Gastrocnemius medialis (tissue), 4 donors: ENCODE measurements at regions of chr2 and their contacts with region 1.

Region 1: GRCh38 chr2:3379647-3380534 is at the start of gene TRAPPC12:
- DNase-seq: peak; percentile 81 to 89
- ATAC-seq: peak; percentile 81 to 83
- H3K4me3 ChIP-seq: peak within 1 kb of the TSS; percentile 83 to 99 (median 91)
- H3K27ac ChIP-seq: peak within 1 kb of the TSS; percentile 90 to 93 (median 93)
- H3K4me1 ChIP-seq: peaks cover 29 to 36% of the 10 kb centered on the region in 2 donors
- H3K27me3 ChIP-seq: no peaks in the 10 kb centered on the region
- CTCF ChIP-seq: peak in 3 of 5 experiments; percentile 19 to 57 (median 55)
- POLR2A ChIP-seq: peak; percentile 72 to 79
- total RNA-seq, gene TRAPPC12: 36.6 to 57.4 (median 53.1) TPM

Region 2: DNA sequence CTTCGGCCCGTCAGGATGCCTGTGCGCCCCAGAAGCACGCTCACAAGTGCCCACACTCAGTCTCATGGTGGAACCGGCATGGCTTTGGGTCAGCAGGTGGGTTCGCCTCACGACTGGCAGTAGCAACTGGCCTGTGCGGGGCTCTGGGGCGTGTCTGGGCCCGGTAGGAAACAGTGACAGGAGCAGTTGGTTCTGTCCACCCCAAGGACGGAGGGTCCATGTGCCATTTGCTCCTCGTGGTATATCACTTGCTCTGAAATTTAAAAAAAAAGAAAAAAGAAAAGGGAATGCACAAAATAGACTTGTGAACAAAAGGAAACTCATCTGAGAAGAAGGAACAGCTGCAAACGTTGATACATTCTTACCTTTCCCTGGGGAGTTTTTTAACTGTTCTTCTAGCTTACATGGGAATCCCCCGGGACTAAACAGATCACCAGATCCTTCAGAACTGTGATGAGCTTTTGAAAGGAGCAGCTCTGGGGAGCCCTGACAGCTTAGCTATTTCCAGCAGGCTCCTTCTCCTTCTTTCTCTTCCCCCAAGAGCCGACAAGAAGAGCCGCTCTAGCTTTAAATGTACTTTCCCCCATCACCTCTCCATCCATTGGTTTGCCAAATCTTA is 42.4 kb after region 1 on chr2:
- in situ Hi-C with region 1: no loop called
- intact Hi-C with region 1: no loop called
- DNase-seq: no peak
- ATAC-seq: no peak
- H3K4me3 ChIP-seq: no peak overlapping the region
- H3K27ac ChIP-seq: no peak overlapping the region
- H3K4me1 ChIP-seq: no peaks in the 10 kb centered on the region
- H3K27me3 ChIP-seq: no peaks in the 10 kb centered on the region
- CTCF ChIP-seq: no peak
- POLR2A ChIP-seq: no peak

Region 3: DNA sequence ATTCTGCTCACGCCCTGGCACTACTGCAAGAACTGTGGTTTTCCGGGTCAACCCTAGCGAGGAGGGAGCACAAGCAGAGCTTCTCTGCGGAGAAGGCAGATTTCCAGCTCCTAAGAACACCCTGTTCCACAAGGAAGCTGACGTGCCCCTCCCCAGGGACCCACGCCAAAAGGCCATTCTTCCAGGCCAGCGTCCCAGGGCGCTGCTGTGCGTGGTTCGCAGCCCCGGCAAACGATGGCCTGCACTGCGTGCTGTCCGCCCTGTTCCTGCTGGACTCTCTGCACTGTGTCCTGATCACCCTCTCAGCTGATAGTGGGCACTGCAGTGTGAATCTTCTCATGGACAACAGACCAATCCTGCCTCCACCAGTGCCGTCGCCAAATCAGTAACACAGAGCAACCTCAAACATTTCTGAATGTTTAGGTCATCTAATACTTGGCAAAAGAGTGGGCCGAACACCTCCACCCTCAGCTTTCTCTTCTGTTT is 90.3 kb after region 1 on chr2:
- in situ Hi-C with region 1: no loop called
- intact Hi-C with region 1: loop called (anchors 5 kb)
- DNase-seq: peak; percentile 93 to 94
- ATAC-seq: peak; percentile 73 to 76
- H3K4me3 ChIP-seq: peak overlapping the region in 3 of 4 donors; percentile 10 to 37 (median 26)
- H3K27ac ChIP-seq: peak overlapping the region; percentile 87 to 99 (median 92)
- H3K4me1 ChIP-seq: peaks cover 36 to 63% of the 10 kb centered on the region in 2 donors
- H3K27me3 ChIP-seq: no peaks in the 10 kb centered on the region
- CTCF ChIP-seq: no peak
- POLR2A ChIP-seq: peak; percentile 17 to 46

Region 4: DNA sequence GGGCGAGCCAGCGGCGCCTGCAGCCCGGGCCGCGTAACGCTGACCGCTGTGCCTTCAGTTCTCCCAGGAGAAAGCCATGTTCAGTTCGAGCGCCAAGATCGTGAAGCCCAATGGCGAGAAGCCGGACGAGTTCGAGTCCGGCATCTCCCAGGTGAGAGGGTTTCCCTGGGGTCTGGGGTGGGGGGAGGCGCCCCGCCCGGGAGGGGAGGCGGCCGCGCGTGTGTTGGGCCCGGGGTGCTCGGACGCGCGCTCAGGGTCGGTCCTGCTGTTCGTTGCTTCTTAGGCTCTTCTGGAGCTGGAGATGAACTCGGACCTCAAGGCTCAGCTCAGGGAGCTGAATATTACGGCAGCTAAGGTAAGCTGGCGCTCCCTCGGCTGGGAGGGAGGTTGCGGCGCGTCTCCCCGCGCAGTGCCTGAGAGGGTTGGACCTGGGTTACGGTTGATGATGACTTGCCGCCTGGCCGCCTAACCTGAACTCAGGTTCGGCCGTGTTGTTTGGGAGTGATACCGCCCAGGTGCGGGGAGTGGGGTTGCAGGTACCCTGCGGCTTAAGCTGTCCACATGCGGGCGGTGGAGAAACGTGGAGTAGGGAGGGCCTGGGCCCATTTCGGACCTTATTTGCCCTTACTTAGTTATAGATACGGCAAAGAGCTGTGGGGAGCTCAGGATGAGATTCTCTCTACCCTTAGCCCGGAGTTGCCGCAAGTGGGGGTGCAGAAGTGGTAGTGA is 195.8 kb after region 1 on chr2:
- in situ Hi-C with region 1: loop called in 3 of 4 experiments (anchors 10 to 25 kb)
- intact Hi-C with region 1: loop called (anchors 1 kb)
- DNase-seq: no peak
- ATAC-seq: peak in 1 of 2 donors; percentile 14
- H3K4me3 ChIP-seq: peak overlapping the region; percentile 78 to 96 (median 84)
- H3K27ac ChIP-seq: peak overlapping the region; percentile 85 to 96 (median 92)
- H3K4me1 ChIP-seq: peaks cover 21 to 30% of the 10 kb centered on the region in 2 donors
- H3K27me3 ChIP-seq: no peaks in the 10 kb centered on the region
- CTCF ChIP-seq: no peak
- POLR2A ChIP-seq: no peak

Region 5: GRCh38 chr2:3651691-3652648 is 272.1 kb after region 1 on chr2:
- in situ Hi-C with region 1: no loop called
- intact Hi-C with region 1: no loop called
- DNase-seq: no peak
- ATAC-seq: peak in 1 of 2 donors; percentile 29
- H3K4me3 ChIP-seq: peak overlapping the region in 3 of 4 donors; percentile 17 to 28 (median 27)
- H3K27ac ChIP-seq: peak overlapping the region in 3 of 4 donors; percentile 0 to 57 (median 3)
- H3K4me1 ChIP-seq: no peaks in the 10 kb centered on the region
- H3K27me3 ChIP-seq: no peaks in the 10 kb centered on the region
- CTCF ChIP-seq: no peak
- POLR2A ChIP-seq: no peak